SK-N-SH (cell line): ENCODE measurements at regions of chr12 and their contacts with region 1.

Region 1: GRCh38 chr12:42568952-42569915 is 20.3 kb downstream of the PRICKLE1 start:
- DNase-seq: no peak
- H3K4me3 ChIP-seq: no peak overlapping the region
- H3K27ac ChIP-seq: no peak overlapping the region; a peak in 1 of 4 replicates
- H3K4me1 ChIP-seq: peaks cover 0 to 10% of the 10 kb centered on the region in 2 experiments; a peak in 2 of 4 replicates
- H3K27me3 ChIP-seq: no peaks in the 10 kb centered on the region
- CTCF ChIP-seq: peak; percentile 68
- EP300 ChIP-seq: no peak
- RAD21 ChIP-seq: peak; percentile 86

Region 2: DNA sequence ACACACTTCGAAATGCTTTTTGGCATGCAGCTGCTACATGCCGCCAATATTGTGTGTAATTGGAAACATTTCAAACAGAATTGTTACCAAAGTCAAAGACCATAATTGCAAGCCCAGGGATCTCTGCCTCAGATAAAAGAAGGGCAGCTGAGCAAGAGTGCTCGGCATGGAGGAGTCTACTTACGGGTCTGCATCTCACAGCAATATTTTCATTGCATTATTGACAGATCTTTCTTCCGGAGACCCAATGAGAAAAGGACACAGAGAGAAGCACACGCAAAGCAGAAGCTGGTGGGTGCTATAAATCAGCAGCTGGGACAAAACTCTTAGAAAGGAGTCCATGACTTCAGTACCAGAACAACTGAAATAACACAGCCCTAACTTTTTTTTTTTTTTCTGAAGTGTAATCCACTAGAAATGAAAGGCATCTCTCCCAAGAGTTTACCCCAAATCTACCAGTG is 15.4 kb after region 1 on chr12:
- CTCF ChIA-PET with region 1: interaction called, 24 read pairs
- POLR2A ChIA-PET with region 1: interaction called, 3 read pairs
- DNase-seq: peak; percentile 24
- H3K4me3 ChIP-seq: no peak overlapping the region; a peak in 1 of 4 replicates
- H3K27ac ChIP-seq: peak overlapping the region in 1 of 2 experiments; percentile 50; a peak in 2 of 4 replicates
- H3K4me1 ChIP-seq: peaks cover 7 to 19% of the 10 kb centered on the region in 2 experiments; a peak in 3 of 4 replicates
- H3K27me3 ChIP-seq: peaks cover 22% of the 10 kb centered on the region
- CTCF ChIP-seq: no peak
- EP300 ChIP-seq: peak in 1 of 2 experiments; percentile 17; a peak in 1 of 4 replicates
- RAD21 ChIP-seq: no peak

Region 3: DNA sequence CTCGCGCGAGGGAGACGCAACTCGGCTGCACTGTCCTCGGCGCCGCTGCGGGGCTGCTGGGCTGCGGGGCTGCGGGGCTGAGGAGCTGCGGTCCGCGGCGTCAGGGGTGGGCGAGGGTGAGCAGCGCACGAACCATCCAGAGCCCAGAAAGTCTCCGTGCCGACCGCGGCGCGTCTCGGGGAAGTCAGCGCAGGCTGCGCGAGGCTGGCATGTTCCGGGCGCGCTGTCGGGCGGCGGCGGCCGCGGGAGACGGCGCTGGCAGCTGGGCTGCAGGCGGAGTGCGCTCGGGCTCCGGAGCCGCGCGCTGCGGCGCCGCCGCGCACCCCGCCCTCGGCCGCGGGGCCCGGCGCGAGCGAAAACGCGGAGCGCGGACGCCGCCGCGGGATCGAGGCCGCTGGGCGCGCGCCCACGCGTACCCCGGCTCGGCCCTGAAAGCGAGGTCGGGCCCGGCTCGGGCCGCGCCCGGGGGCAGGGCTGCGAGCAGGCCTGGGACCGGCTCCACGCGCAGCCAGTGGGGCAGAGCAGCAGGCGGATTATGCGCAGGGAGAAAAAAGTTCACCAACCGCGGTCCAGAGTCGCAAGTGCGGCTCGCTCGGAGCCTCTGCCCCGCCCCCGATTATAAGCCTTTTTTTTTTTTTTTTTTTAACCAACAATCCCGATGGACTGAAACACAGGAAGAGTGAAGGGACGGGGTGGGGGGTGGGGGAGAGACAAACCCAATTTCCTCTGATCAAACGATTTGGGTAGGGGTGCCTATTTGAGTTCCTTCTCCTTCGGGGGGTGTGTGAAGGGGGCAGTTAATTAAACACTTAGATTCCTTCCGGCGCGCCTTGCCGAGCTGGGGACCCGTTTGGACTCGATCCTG is 20.5 kb after region 1 on chr12 and contains the start of gene PRICKLE1:
- CTCF ChIA-PET with region 1: interaction called, 24 read pairs
- POLR2A ChIA-PET with region 1: interaction called, 3 read pairs
- DNase-seq: peak; percentile 90
- H3K4me3 ChIP-seq: peak within 1 kb of the TSS; percentile 61 to 62
- H3K27ac ChIP-seq: peak within 1 kb of the TSS in 1 of 2 experiments; percentile 58; a peak in 2 of 4 replicates
- H3K4me1 ChIP-seq: peaks cover 7 to 25% of the 10 kb centered on the region in 2 experiments; a peak in 3 of 4 replicates
- H3K27me3 ChIP-seq: peaks cover 33% of the 10 kb centered on the region
- CTCF ChIP-seq: no peak
- EP300 ChIP-seq: no peak
- RAD21 ChIP-seq: no peak
- polyA plus RNA-seq, gene PRICKLE1: 0.45 and 1.2 TPM in 2 replicates

Region 4: GRCh38 chr12:42631513-42631912 is 62.3 kb after region 1 on chr12:
- CTCF ChIA-PET with region 1: no interaction called
- POLR2A ChIA-PET with region 1: no interaction called
- DNase-seq: no peak
- H3K4me3 ChIP-seq: no peak overlapping the region
- H3K27ac ChIP-seq: no peak overlapping the region
- H3K4me1 ChIP-seq: no peaks in the 10 kb centered on the region
- H3K27me3 ChIP-seq: no peaks in the 10 kb centered on the region
- CTCF ChIP-seq: no peak
- EP300 ChIP-seq: no peak
- RAD21 ChIP-seq: no peak

Region 5: GRCh38 chr12:42679466-42679865 is 110.2 kb after region 1 on chr12:
- CTCF ChIA-PET with region 1: no interaction called
- POLR2A ChIA-PET with region 1: no interaction called
- DNase-seq: no peak
- H3K4me3 ChIP-seq: no peak overlapping the region
- H3K27ac ChIP-seq: no peak overlapping the region
- H3K4me1 ChIP-seq: no peaks in the 10 kb centered on the region
- H3K27me3 ChIP-seq: no peaks in the 10 kb centered on the region
- CTCF ChIP-seq: no peak
- EP300 ChIP-seq: no peak
- RAD21 ChIP-seq: no peak